CD8-positive, alpha-beta memory T cell (primary cell): ENCODE measurements at regions of chr6 and their contacts with region 1.

Region 1: GRCh38 chr6:158605266-158605878 is 39.2 kb downstream of the DYNLT1 start:
- DNase-seq: peak in 4 of 5 donors; percentile 11 to 41 (median 28)
- H3K4me3 ChIP-seq: no peak overlapping the region
- H3K4me3 Mint-ChIP-seq: no peak overlapping the region
- H3K27ac ChIP-seq: no peak overlapping the region
- H3K27ac Mint-ChIP-seq: peak overlapping the region in 4 of 8 donors; percentile 22 to 63 (median 52)
- H3K4me1 ChIP-seq: no peaks in the 10 kb centered on the region
- H3K4me1 Mint-ChIP-seq: peaks cover 12 to 22% (median 16%) of the 10 kb centered on the region in 3 donors
- H3K27me3 ChIP-seq: no peaks in the 10 kb centered on the region
- H3K27me3 Mint-ChIP-seq: no peaks in the 10 kb centered on the region

Region 2: DNA sequence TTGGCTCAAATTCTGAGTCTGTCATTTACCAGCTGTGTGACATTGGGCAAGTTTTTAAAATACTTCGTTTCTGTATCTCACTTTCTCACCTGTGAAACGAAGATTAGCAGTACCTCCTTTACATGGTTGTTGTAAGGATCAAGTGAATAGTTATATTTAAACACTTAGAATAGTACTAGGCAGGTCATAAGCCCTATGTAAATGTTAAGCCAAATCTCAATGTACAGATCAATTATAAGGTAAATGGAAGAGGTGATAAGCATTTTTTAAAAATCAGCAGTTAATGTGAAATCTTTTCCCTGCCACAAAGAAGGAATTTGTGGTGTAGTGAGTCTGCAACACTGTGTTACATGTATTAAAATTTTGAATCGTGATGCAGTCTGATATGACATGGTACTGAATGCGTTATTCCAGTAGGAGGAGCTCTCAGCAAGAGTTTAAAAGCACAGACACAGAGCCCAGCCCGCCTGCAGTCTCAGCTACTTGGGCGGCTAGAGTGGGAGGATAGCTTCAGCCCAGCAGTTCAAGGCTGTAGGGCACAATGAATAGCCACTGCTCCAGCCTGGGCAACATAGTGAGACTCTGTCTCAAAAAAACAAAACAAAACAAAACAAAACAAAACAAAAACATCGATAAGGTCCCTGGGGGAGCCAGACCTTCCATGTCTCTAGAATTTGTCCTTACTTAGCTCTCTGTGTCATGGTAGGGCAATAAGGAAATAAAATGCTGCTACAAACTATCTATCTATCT is 391.3 kb before region 1 on chr6:
- CTCF ChIA-PET with region 1: interaction called, 12 read pairs
- POLR2A ChIA-PET with region 1: no interaction called
- DNase-seq: peak; percentile 8 to 59 (median 39)
- H3K4me3 ChIP-seq: no peak overlapping the region
- H3K4me3 Mint-ChIP-seq: no peak overlapping the region
- H3K27ac ChIP-seq: no peak overlapping the region
- H3K27ac Mint-ChIP-seq: no peak overlapping the region
- H3K4me1 ChIP-seq: no peaks in the 10 kb centered on the region
- H3K4me1 Mint-ChIP-seq: peaks cover 0 to 11% (median 0%) of the 10 kb centered on the region in 3 donors
- H3K27me3 ChIP-seq: no peaks in the 10 kb centered on the region
- H3K27me3 Mint-ChIP-seq: peaks cover 0 to 3% of the 10 kb centered on the region in 2 donors